ENCODE measurements at regions of chr18 and their contacts with region 1.

Region 1: GRCh38 chr18:830315-830901 is 18.4 kb upstream of the YES1 start:
- DNase-seq: peak; percentile 50
- ATAC-seq: peak; percentile 78
- H3K4me3 Mint-ChIP-seq: peak overlapping the region; percentile 61
- H3K27ac Mint-ChIP-seq: peak overlapping the region; percentile 87
- H3K4me1 Mint-ChIP-seq: peaks cover 24% of the 10 kb centered on the region
- H3K27me3 Mint-ChIP-seq: no peaks in the 10 kb centered on the region
- CTCF ChIP-seq: no peak

Region 2: DNA sequence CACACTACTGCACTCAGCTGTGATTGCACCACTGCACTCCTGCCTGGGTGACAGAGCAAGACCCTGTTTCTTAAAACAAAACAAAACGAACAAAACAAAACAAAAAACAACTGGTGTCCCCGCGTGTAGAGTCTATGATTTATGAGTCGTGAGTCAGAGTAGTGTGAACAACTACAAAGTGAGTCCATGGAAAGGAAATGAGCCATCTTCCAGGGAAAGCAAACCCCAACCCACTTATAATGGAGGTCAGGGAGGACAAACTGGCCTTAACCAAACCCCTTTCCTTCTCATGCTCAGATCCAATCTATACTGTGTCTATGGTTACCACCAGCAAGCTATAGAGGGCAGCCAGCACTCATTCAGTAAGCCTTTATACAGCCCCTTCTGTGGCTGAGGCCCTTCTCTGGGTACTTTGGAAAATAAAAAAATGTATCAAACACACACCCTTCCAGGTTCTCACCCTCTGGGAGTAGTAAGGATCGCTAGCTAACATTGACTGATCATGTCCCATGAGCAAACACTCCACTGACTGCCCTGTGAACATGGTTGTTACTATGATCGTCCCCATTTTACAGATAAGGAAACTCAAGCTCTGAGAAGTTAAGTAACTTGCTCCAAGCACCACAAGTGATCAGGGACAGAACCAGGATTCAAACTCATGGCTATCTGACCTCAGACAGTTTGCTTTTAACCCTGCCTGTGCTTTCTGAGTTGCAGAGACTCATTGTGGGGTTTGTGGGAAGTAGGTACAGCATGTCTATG is 305.2 kb before region 1 on chr18:
- CTCF ChIA-PET with region 1: no interaction called
- POLR2A ChIA-PET with region 1: no interaction called
- intact Hi-C with region 1: no loop called
- DNase-seq: no peak
- ATAC-seq: no peak
- H3K4me3 Mint-ChIP-seq: no peak overlapping the region
- H3K27ac Mint-ChIP-seq: no peak overlapping the region
- H3K4me1 Mint-ChIP-seq: no peaks in the 10 kb centered on the region
- H3K27me3 Mint-ChIP-seq: peaks cover 5% of the 10 kb centered on the region
- CTCF ChIP-seq: no peak

Region 3: DNA sequence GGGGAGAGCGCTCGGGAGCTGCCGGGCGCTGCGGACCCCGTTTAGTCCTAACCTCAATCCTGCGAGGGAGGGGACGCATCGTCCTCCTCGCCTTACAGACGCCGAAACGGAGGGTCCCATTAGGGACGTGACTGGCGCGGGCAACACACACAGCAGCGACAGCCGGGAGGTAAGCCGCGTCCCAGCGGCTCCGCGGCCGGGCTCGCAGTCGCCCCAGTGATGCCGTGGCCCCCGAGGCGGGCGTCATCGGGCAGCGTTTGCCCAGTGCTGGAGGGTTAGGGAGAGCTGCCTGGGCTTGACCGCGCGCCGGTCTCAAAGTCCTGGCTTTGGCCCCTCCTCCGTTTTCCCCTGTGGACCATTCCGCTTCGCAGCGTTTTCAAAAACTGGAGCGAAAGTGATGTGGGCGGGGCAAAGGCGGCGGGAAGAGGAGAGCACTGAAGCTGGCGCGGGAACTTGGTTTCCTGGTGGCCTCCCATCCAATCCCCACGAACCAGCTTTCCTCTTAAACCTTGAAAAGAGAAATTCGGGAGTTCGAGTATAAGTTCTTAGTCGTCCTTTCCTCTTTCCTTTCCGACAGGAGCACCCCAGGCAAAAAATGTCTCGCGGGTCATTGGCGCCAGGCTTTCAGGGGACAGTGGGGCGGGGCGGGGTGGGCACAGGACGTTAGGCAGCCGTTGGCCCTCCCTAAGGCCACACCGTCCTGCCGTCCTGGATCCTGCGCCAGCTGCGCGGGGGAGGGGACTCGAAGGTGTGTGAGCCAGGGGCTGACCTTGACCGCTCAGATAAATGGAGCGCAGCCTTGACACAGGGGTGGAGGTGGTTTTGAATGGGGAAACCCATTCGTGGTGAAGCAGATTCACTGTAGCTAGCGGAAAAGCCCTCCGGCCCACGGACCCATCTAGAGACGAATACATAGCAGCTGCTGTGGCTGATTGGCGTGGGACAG is 172.1 kb before region 1 on chr18:
- CTCF ChIA-PET with region 1: interaction called, 20 read pairs
- POLR2A ChIA-PET with region 1: interaction called, 3 read pairs
- intact Hi-C with region 1: no loop called
- DNase-seq: peak; percentile 85
- ATAC-seq: peak; percentile 68
- H3K4me3 Mint-ChIP-seq: peak overlapping the region; percentile 94
- H3K27ac Mint-ChIP-seq: peak overlapping the region; percentile 94
- H3K4me1 Mint-ChIP-seq: peaks cover 20% of the 10 kb centered on the region
- H3K27me3 Mint-ChIP-seq: peaks cover 24% of the 10 kb centered on the region
- CTCF ChIP-seq: no peak

Region 4: GRCh38 chr18:725646-726045 is 104.8 kb before region 1 on chr18:
- CTCF ChIA-PET with region 1: interaction called, 12 read pairs
- POLR2A ChIA-PET with region 1: no interaction called
- intact Hi-C with region 1: no loop called
- DNase-seq: no peak
- ATAC-seq: no peak
- H3K4me3 Mint-ChIP-seq: no peak overlapping the region
- H3K27ac Mint-ChIP-seq: peak overlapping the region; percentile 30
- H3K4me1 Mint-ChIP-seq: peaks cover under 1% of the 10 kb centered on the region
- H3K27me3 Mint-ChIP-seq: no peaks in the 10 kb centered on the region
- CTCF ChIP-seq: no peak

Region 5: GRCh38 chr18:741931-742512 is 88.4 kb before region 1 on chr18:
- CTCF ChIA-PET with region 1: interaction called, 224 read pairs
- POLR2A ChIA-PET with region 1: interaction called, 10 read pairs
- intact Hi-C with region 1: loop called (anchors 1 kb)
- DNase-seq: no peak
- ATAC-seq: peak; percentile 83
- H3K4me3 Mint-ChIP-seq: no peak overlapping the region
- H3K27ac Mint-ChIP-seq: no peak overlapping the region
- H3K4me1 Mint-ChIP-seq: peaks cover 2% of the 10 kb centered on the region
- H3K27me3 Mint-ChIP-seq: no peaks in the 10 kb centered on the region
- CTCF ChIP-seq: peak; percentile 74

Region 6: GRCh38 chr18:778194-778927 is 52.0 kb before region 1 on chr18:
- CTCF ChIA-PET with region 1: interaction called, 13 read pairs
- POLR2A ChIA-PET with region 1: no interaction called
- intact Hi-C with region 1: no loop called
- DNase-seq: no peak
- ATAC-seq: no peak
- H3K4me3 Mint-ChIP-seq: no peak overlapping the region
- H3K27ac Mint-ChIP-seq: no peak overlapping the region
- H3K4me1 Mint-ChIP-seq: peaks cover 36% of the 10 kb centered on the region
- H3K27me3 Mint-ChIP-seq: no peaks in the 10 kb centered on the region
- CTCF ChIP-seq: no peak

Region 7: GRCh38 chr18:812376-813171 is 17.8 kb before region 1 on chr18:
- CTCF ChIA-PET with region 1: interaction called, 98 read pairs
- POLR2A ChIA-PET with region 1: interaction called, 32 read pairs
- intact Hi-C with region 1: loop called (anchors 2 kb)
- DNase-seq: peak; percentile 93
- ATAC-seq: peak; percentile 66
- H3K4me3 Mint-ChIP-seq: peak overlapping the region; percentile 84
- H3K27ac Mint-ChIP-seq: peak overlapping the region; percentile 100
- H3K4me1 Mint-ChIP-seq: peaks cover 66% of the 10 kb centered on the region
- H3K27me3 Mint-ChIP-seq: peaks cover 2% of the 10 kb centered on the region
- CTCF ChIP-seq: no peak